ENCODE measurements at regions of chr6 and their contacts with region 1.

Region 1: DNA sequence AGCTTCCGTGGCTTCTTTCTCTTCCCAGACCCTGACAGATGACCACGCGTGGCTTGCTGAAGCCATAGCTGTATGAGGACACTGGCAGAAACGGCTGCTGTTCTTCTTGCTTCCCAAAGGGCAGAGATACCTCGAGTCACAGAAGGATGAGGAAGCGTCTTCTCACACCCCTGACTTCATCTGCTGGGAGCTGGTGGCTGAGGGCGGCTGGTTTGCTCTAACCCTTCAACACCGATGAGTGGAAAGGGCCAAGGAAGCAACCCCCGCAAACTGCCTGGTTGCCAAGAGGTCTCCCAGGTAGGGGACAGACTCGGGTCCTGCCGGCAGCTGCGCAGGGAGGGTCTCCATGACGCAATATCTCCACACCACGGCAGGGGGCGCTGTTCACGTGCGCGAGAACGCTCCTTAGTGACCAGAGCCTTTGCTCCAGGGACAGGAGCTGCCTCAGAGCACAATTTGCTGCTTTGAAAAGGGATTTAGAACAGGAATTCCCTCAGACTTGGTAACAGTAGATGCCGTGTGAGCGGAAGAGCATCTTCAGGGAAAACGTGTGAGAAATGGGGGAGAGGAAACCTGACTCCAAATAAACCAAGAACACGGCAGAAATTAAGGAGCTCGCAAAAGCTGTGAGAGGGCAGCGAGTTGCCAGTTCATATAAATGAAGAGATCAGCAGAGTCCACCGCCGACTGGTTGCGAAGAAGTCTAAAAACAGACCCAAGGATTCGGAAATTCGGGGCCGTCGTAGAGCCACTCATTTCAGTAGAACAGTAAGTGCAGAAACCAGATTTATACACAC is 80.2 kb downstream of the ERMARD start:
- DNase-seq: peak; percentile 70 to 82
- H3K4me3 ChIP-seq: no peak overlapping the region
- H3K4me3 Mint-ChIP-seq: peak overlapping the region; percentile 27
- H3K27ac Mint-ChIP-seq: peak overlapping the region; percentile 48
- H3K4me1 ChIP-seq: peaks cover 35% of the 10 kb centered on the region
- H3K4me1 Mint-ChIP-seq: peaks cover 41% of the 10 kb centered on the region
- H3K27me3 ChIP-seq: no peaks in the 10 kb centered on the region
- H3K27me3 Mint-ChIP-seq: no peaks in the 10 kb centered on the region
- CTCF ChIP-seq: peak; percentile 74 to 83

Region 2: GRCh38 chr6:169556758-169557548 is 274.7 kb before region 1 on chr6:
- CTCF ChIA-PET with region 1: no interaction called
- POLR2A ChIA-PET with region 1: no interaction called
- intact Hi-C with region 1: no loop called
- DNase-seq: no peak
- H3K4me3 ChIP-seq: no peak overlapping the region
- H3K4me3 Mint-ChIP-seq: no peak overlapping the region
- H3K27ac Mint-ChIP-seq: no peak overlapping the region
- H3K4me1 ChIP-seq: no peaks in the 10 kb centered on the region
- H3K4me1 Mint-ChIP-seq: no peaks in the 10 kb centered on the region
- H3K27me3 ChIP-seq: no peaks in the 10 kb centered on the region
- H3K27me3 Mint-ChIP-seq: no peaks in the 10 kb centered on the region
- CTCF ChIP-seq: no peak

Region 3: DNA sequence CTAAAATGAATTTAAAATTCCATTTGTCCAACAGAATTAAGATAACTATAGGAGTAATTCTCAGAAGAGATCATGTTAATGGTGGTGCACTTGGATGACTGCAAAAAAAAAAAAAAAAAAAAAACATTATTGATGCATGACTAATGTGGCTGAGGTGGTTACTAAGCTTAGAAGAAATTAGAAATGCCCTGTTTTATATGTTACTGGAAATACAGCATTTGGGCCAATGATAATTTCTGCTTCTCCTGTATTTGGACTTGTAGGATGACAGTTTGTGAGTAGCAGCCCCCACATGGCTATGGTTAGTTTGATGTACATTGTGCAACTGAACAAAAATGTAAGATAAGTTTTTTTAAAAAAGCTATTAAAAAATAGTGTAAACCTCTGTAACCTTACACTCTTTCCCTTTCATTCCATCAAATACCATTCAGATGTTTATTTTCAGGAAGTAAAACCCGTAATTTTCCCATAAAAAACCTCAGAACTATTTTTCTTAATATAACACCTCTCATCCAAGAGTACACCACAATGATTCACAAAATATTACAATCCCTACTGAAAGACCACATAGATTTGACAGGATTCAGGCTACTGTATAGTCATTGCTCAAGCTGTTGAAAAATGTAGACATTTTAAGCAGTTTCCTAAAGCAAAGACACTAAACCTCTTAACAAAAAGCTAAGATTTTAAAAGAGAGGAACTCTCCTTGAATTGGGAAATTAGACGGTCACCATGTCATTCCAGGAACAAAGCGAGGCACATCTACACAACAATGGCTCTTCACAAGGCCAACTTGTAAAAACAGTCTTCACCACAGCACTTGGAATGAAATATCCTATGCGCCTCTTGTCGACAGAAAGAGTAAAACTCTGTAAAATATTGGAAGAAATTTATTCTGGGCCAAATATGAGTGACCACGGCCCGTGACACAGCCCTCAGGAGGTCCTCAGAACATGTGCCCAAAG is 212.8 kb before region 1 on chr6:
- CTCF ChIA-PET with region 1: no interaction called
- POLR2A ChIA-PET with region 1: no interaction called
- intact Hi-C with region 1: no loop called
- DNase-seq: no peak
- H3K4me3 ChIP-seq: no peak overlapping the region
- H3K4me3 Mint-ChIP-seq: no peak overlapping the region
- H3K27ac Mint-ChIP-seq: no peak overlapping the region
- H3K4me1 ChIP-seq: peaks cover 24% of the 10 kb centered on the region
- H3K4me1 Mint-ChIP-seq: peaks cover 16% of the 10 kb centered on the region
- H3K27me3 ChIP-seq: no peaks in the 10 kb centered on the region
- H3K27me3 Mint-ChIP-seq: no peaks in the 10 kb centered on the region
- CTCF ChIP-seq: no peak

Region 4: DNA sequence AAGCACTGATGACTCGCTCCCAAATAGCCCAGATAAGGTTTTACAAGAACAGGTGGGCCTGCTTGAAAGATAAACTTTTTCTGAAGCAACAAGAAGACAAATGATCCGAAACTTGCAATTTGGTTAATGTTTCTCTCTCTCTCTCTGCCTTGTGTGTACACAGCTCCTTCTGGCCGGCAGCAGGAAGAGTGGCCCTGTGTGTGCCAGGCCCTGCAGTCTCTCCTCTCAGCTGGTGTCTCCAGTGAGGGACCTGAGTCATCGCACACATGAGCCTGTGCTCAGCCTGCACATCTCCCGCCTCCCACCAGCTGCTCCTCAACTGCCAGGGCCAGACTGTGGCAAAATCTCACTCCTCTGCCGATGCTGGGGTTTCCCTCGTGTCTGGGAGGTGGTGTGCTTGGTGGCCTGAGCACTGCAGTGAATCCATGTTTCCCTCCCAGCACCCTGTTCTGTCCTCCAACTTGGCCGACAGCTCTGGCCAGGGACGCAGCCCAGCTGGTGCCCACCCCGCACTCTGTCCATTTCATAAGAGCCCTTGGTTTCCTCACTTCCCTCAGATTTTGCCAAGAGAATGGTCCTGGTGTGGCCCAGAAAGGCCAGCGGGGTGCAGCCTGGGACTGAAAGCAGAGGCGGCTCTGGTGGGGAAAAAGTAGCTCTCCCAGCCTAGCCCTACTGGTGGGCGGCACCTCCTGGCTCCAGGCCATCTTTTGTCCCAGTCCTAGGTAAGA is 30.8 kb before region 1 on chr6:
- CTCF ChIA-PET with region 1: interaction called, 24 read pairs
- POLR2A ChIA-PET with region 1: interaction called, 4 read pairs
- intact Hi-C with region 1: loop called (anchors 2 kb)
- DNase-seq: peak; percentile 92 to 97
- H3K4me3 ChIP-seq: no peak overlapping the region
- H3K4me3 Mint-ChIP-seq: peak overlapping the region; percentile 75
- H3K27ac Mint-ChIP-seq: peak overlapping the region; percentile 93
- H3K4me1 ChIP-seq: peaks cover 81% of the 10 kb centered on the region
- H3K4me1 Mint-ChIP-seq: peaks cover 49% of the 10 kb centered on the region
- H3K27me3 ChIP-seq: no peaks in the 10 kb centered on the region
- H3K27me3 Mint-ChIP-seq: no peaks in the 10 kb centered on the region
- CTCF ChIP-seq: no peak

Region 5: DNA sequence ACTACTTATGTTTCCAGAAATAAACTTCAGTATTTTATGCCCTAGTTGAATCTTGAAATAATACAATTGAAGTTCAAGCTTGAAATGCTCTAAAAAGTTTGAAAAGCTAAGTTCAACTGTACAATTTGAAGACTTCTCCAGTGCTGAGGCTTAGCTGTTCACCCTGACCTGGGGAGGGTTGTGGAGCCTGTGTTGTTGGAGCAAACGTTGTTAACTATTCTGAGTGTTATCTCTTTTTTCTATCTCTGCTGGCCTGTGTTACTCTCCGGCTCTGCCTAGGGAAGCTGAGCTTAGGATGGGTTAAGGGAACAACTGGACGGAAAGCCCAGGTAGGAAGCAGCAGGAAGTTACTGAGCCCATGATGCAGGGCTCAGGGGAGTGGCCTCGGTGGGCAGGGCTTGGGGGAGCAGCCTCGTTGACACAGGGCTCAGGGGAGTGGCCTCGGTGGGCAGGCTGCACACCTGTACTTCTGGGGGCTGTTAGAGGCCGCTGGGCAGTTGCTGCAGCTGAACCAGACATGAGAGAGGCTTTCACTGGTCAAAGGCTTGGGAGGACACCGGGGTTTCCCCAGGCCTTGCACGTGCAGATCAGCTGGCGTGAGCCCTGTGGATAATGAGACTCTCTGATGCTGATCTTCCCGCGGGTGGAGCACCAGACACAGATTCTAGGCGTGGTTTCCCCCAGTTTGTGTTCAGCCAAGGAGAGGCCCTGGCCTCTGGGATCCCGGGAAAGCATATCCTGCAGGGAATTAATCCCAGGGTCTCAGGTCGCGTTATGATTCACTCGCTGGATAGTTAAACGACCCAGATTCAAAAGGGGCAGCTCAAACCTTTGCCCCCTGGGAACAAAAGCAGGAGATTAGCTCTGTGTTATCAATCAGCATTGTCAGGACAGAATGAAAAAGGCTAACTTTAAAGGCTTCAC is 21.3 kb before region 1 on chr6:
- CTCF ChIA-PET with region 1: interaction called, 24 read pairs
- POLR2A ChIA-PET with region 1: interaction called, 4 read pairs
- intact Hi-C with region 1: loop called (anchors 1 kb)
- DNase-seq: peak; percentile 94 to 95
- H3K4me3 ChIP-seq: 0 out of 2 replicates have a peak overlapping the region, but pooled peaks have one; percentile 4
- H3K4me3 Mint-ChIP-seq: peak overlapping the region; percentile 66
- H3K27ac Mint-ChIP-seq: peak overlapping the region; percentile 92
- H3K4me1 ChIP-seq: peaks cover 47% of the 10 kb centered on the region
- H3K4me1 Mint-ChIP-seq: peaks cover 56% of the 10 kb centered on the region
- H3K27me3 ChIP-seq: no peaks in the 10 kb centered on the region
- H3K27me3 Mint-ChIP-seq: no peaks in the 10 kb centered on the region
- CTCF ChIP-seq: no peak

Region 6: DNA sequence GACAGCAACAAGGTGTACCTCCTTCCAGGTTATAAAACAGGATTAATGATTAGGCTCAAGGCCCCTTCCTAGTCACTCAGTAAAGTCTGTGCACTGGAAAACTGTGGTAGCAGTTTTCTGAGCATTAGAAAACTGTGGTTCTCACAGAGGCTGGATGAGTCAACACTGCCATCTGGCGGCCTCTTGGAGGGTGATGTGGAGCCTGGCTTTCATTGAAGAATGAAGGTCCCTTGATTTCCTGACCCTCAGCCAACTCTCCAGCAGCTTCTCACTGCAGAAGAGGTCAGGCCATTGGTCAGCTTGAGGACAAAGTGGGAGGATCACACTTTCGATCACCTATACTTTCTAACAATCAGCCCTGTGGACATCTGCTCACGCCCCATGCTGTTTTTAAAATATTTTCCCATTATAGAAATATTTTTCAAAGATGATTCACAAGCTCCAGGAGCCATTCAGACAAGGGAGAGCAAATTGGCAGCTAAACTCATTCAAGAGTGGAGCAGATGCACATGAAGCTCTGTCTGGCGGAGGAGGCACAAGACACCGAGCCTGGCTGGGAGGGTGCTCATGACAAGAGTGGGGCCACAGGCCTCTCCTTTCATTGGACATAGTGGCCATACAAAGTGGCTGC is 698.3 kb after region 1 on chr6:
- CTCF ChIA-PET with region 1: no interaction called
- POLR2A ChIA-PET with region 1: no interaction called
- intact Hi-C with region 1: loop called (anchors 1 kb)
- DNase-seq: peak; percentile 69 to 74
- H3K4me3 ChIP-seq: no peak overlapping the region
- H3K4me3 Mint-ChIP-seq: no peak overlapping the region
- H3K27ac Mint-ChIP-seq: no peak overlapping the region
- H3K4me1 ChIP-seq: peaks cover 13% of the 10 kb centered on the region
- H3K4me1 Mint-ChIP-seq: peaks cover under 1% of the 10 kb centered on the region
- H3K27me3 ChIP-seq: no peaks in the 10 kb centered on the region
- H3K27me3 Mint-ChIP-seq: no peaks in the 10 kb centered on the region
- CTCF ChIP-seq: peak; percentile 77 to 91

Measured in Caco-2 (cell line).